ENCODE measurements at regions of chr15 and their contacts with region 1.

Region 1: GRCh38 chr15:64681424-64682024 is 93.9 kb downstream of the RBPMS2 start:
- DNase-seq: no peak
- ATAC-seq: peak; percentile 82 to 91 (median 86)
- H3K4me3 ChIP-seq: no peak overlapping the region
- H3K27ac ChIP-seq: no peak overlapping the region
- H3K4me1 ChIP-seq: no peaks in the 10 kb centered on the region
- H3K27me3 ChIP-seq: no peaks in the 10 kb centered on the region
- CTCF ChIP-seq: peak; percentile 72

Region 2: DNA sequence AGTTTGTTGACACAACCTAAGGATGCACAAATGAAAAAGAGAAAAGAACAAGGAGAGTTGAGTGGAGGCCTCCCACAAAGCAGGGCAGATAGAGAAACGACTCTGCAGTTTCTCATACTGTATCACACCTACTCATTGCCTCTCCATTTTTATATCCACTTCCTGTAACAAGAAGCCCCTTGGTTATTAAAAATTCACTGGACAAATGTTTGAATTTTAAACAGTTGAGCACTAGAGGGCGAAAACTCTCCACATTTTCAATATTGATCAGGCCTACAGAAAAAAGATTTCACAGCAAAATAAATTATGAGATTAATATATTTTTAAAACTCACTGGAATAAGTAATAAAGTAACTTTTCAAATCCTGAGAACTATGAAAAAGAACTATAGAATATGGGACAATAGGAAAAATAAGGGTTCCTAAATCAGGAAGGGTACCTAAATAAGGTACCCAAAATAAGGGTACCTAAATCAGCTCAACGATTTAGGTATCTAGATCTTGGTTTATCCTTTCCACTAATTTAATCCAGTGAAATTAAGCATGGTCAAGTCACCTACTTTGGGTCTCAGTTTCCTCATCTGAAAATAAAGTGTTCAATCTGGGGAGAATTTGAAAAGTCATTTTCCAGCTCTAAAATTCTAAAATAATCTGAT is 471.7 kb before region 1 on chr15:
- intact Hi-C with region 1: loop called in 1 of 2 experiments (anchors 5 kb)
- DNase-seq: no peak
- ATAC-seq: no peak
- H3K4me3 ChIP-seq: no peak overlapping the region
- H3K27ac ChIP-seq: no peak overlapping the region
- H3K4me1 ChIP-seq: no peaks in the 10 kb centered on the region
- H3K27me3 ChIP-seq: no peaks in the 10 kb centered on the region
- CTCF ChIP-seq: peak; percentile 35

Region 3: DNA sequence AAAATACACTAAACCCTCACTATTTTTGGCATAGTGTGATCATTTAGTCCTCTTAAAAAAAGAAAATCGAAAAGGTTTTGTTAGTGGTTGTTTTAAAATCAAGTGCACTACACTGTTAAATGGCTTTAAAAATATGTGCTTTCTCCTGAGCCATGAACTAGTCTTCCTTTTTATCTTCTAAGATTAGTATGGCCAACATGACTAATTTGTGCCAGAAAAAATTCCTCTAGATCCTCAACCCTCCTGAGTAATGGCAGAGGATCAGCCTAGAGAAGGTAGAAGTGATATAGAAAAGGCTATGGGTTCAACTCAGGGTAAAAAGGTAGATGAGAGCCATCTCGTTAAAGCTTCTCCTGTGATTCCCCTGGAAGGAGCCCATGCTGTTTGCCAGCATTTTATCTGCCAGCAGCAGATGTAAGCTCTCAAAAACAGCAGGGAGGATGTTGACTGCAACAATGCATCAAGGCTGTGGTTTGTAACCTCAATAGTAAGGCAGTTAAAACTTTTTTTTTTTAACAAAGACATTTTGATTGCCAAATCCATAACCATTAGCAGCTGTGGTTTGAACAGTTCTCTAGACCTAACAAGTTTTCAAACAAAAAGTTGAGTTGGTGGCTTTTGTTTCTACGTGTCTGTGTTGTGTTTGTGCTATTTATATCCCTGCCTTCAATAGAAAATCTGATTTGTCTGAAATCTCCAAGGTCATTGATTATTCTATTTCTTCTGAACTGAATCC is 251.4 kb before region 1 on chr15:
- intact Hi-C with region 1: loop called in 1 of 2 experiments (anchors 5 kb)
- DNase-seq: no peak
- ATAC-seq: peak in 1 of 4 donors; percentile 21
- H3K4me3 ChIP-seq: no peak overlapping the region
- H3K27ac ChIP-seq: no peak overlapping the region
- H3K4me1 ChIP-seq: no peaks in the 10 kb centered on the region
- H3K27me3 ChIP-seq: no peaks in the 10 kb centered on the region
- CTCF ChIP-seq: no peak

Region 4: GRCh38 chr15:64536244-64536836 is 145.2 kb before region 1 on chr15:
- intact Hi-C with region 1: no loop called
- DNase-seq: no peak
- ATAC-seq: no peak
- H3K4me3 ChIP-seq: no peak overlapping the region
- H3K27ac ChIP-seq: no peak overlapping the region
- H3K4me1 ChIP-seq: peaks cover 4% of the 10 kb centered on the region
- H3K27me3 ChIP-seq: no peaks in the 10 kb centered on the region
- CTCF ChIP-seq: no peak

Region 5: DNA sequence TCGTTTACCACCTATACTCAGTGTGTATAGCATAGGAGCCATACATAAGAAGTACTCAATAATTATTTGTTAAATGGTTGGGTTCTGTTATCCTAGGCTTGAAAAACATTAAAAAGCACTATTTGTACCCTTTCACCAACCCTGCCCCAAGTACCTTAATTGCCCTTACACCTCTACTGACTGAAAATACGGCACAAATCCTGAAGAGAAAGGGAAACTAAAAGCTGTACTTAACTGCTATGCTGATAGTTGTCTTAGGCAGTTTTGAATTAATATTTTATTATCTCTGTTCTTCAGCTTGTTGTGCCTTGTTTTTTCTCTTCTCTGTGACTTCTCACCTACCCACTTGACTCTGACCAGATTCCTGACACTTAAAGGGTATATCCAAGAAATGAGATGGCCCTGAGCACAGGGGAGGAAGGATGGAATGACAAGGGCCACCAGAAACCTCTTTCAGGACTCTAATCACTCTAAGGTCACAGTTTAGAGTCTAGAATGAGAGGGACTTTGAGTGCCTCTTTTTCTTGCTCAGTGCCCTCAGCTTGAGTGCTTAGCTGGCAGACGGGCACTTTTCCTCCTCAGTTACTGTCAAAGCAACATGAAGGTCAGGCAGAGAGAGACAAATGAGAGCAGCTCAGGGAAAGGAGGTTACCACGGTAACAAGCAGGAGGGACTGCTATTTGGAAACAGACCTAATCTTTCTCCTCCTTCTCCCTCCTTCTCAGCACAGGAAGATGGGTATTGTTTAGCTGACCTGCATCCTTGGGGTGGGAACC is 84.6 kb before region 1 on chr15:
- intact Hi-C with region 1: no loop called
- DNase-seq: no peak
- ATAC-seq: peak in 1 of 4 donors; percentile 36
- H3K4me3 ChIP-seq: no peak overlapping the region
- H3K27ac ChIP-seq: no peak overlapping the region
- H3K4me1 ChIP-seq: peaks cover 8% of the 10 kb centered on the region
- H3K27me3 ChIP-seq: no peaks in the 10 kb centered on the region
- CTCF ChIP-seq: no peak

Region 6: GRCh38 chr15:64731012-64731806 is 49.7 kb after region 1 on chr15:
- intact Hi-C with region 1: loop called (anchors 1 to 2 kb)
- DNase-seq: peak; percentile 85 to 92
- ATAC-seq: peak; percentile 80 to 91 (median 90)
- H3K4me3 ChIP-seq: peak overlapping the region; percentile 9
- H3K27ac ChIP-seq: no peak overlapping the region
- H3K4me1 ChIP-seq: no peaks in the 10 kb centered on the region
- H3K27me3 ChIP-seq: no peaks in the 10 kb centered on the region
- CTCF ChIP-seq: peak; percentile 93

Region 7: GRCh38 chr15:64809649-64810496 is 128.3 kb after region 1 on chr15:
- intact Hi-C with region 1: loop called (anchors 5 kb)
- DNase-seq: peak; percentile 81 to 87
- ATAC-seq: peak; percentile 85 to 96 (median 88)
- H3K4me3 ChIP-seq: no peak overlapping the region
- H3K27ac ChIP-seq: no peak overlapping the region
- H3K4me1 ChIP-seq: no peaks in the 10 kb centered on the region
- H3K27me3 ChIP-seq: no peaks in the 10 kb centered on the region
- CTCF ChIP-seq: peak; percentile 86

Measured in psoas muscle (tissue), 8 donors.